ENCODE measurements at regions of chr14 and their contacts with region 1.

Region 1: DNA sequence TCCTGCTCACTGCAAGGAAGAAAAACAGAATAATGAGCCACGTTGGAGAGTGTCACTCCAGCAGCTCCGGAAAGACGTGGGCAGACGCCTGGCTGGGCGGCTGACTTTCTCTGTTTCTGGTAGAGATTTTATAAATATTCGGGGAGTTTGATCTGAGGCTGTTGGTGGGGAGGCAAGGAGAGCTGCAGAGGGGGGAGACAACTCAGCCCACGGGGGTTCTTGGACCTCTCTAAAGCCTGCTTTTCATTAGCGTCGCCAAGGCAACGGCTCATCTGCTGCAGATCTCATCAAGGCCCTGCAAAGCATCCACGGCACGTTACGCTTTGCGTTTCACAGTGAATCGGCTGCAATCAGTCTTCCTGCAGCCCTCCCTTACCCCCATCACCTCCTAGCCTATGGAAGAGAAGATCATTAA is 207.2 kb downstream of the ZFP36L1 start:
- DNase-seq: no peak
- ATAC-seq: no peak
- H3K4me3 ChIP-seq: no peak overlapping the region
- H3K27ac ChIP-seq: no peak overlapping the region
- H3K4me1 ChIP-seq: no peaks in the 10 kb centered on the region; the same call in 1 of the 2 replicates
- H3K27me3 ChIP-seq: no peaks in the 10 kb centered on the region
- CTCF ChIP-seq: no peak

Region 2: GRCh38 chr14:68487805-68488590 is 97.7 kb before region 1 on chr14:
- CTCF ChIA-PET with region 1: no interaction called
- POLR2A ChIA-PET with region 1: no interaction called
- in situ Hi-C with region 1: no loop called
- intact Hi-C with region 1: no loop called
- DNase-seq: no peak
- ATAC-seq: no peak
- H3K4me3 ChIP-seq: no peak overlapping the region
- H3K27ac ChIP-seq: no peak overlapping the region
- H3K4me1 ChIP-seq: no peaks in the 10 kb centered on the region
- H3K27me3 ChIP-seq: no peaks in the 10 kb centered on the region
- CTCF ChIP-seq: no peak

Region 3: GRCh38 chr14:68598621-68599447 is 13.1 kb after region 1 on chr14:
- CTCF ChIA-PET with region 1: no interaction called
- POLR2A ChIA-PET with region 1: interaction called, 13 read pairs
- in situ Hi-C with region 1: no loop called
- intact Hi-C with region 1: no loop called
- DNase-seq: peak; percentile 52
- ATAC-seq: peak; percentile 94
- H3K4me3 ChIP-seq: peak overlapping the region in 1 of 2 experiments; percentile 41; a peak in 2 of 4 replicates
- H3K27ac ChIP-seq: peak overlapping the region; percentile 83
- H3K4me1 ChIP-seq: peaks cover 19% of the 10 kb centered on the region
- H3K27me3 ChIP-seq: no peaks in the 10 kb centered on the region
- CTCF ChIP-seq: no peak